Activated CD4-positive, alpha-beta memory T cell treated with anti-CD3 and anti-CD28 coated beads for 36 hours (primary cell): ENCODE measurements at regions of chr9 and their contacts with region 1.

Region 1: DNA sequence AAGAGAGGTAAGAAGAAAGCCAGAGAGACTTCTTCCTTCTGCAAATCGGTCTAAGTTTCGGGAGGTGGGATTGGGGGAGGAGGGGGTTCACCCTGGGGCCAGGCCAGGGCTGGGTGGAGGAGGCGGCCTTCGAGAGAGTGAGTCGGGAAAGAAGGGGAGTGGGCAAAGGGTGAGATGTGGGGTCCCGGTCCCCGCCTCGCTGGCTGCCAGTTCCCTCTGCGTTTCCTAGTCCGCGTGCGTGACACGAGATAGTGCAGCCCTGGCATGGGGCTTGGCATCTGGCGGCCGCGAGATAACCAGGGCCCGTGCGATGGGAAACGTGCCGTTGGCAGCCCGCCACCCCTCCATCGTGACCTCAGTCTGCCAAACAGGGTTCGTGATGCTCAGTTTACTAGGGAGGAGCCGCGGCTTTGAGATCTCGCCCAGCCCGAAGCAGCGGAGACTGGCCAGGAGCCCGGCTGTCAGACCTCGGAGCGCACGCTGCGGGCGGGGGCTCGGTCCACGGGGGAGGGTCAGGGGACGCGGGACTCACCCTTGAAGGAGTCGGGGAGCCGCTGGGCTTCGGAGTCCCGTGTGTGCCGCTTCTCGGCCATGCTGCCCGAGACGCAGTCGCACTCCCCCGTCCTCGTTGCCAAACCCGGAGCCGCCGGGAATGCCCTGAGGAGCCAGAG is at the start of gene STOM:
- DNase-seq: peak; percentile 79
- H3K4me3 Mint-ChIP-seq: peak within 1 kb of the TSS; percentile 93
- H3K27ac Mint-ChIP-seq: peak within 1 kb of the TSS; percentile 99
- H3K4me1 Mint-ChIP-seq: peaks cover 58% of the 10 kb centered on the region
- H3K27me3 Mint-ChIP-seq: no peaks in the 10 kb centered on the region
- total RNA-seq, gene STOM: 49.8 to 51.9 TPM

Region 2: DNA sequence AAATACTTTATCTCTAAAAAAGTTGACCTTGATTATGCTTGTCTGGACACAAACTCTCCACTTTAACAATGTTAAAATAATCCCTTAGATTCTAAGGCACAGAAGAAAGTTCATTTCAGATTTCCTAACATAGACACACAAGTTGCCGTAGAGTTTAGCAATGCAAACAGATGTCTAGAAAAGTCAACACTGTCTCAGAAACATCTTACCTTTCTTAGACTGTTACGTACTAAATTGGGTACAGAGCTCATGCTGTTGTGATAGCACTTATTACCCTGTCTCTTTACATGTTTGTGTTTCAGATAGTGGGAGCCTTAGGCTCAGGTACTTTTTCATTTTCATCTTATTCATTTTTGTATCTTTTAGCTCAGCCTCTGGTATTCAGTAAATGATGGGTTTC is 371.6 kb before region 1 on chr9:
- CTCF ChIA-PET with region 1: no interaction called
- POLR2A ChIA-PET with region 1: no interaction called
- intact Hi-C with region 1: no loop called
- DNase-seq: no peak
- H3K4me3 Mint-ChIP-seq: no peak overlapping the region
- H3K27ac Mint-ChIP-seq: no peak overlapping the region
- H3K4me1 Mint-ChIP-seq: no peaks in the 10 kb centered on the region
- H3K27me3 Mint-ChIP-seq: no peaks in the 10 kb centered on the region

Region 3: GRCh38 chr9:121350993-121351561 is 18.7 kb before region 1 on chr9:
- CTCF ChIA-PET with region 1: interaction called, 5 read pairs
- POLR2A ChIA-PET with region 1: interaction called, 7 read pairs
- intact Hi-C with region 1: loop called (anchors 1 kb)
- DNase-seq: peak; percentile 29
- H3K4me3 Mint-ChIP-seq: no peak overlapping the region
- H3K27ac Mint-ChIP-seq: no peak overlapping the region
- H3K4me1 Mint-ChIP-seq: peaks cover 31% of the 10 kb centered on the region
- H3K27me3 Mint-ChIP-seq: no peaks in the 10 kb centered on the region